ENCODE measurements at regions of chr1 and their contacts with region 1.

Region 1: GRCh38 chr1:9942939-9943788 is at the starts of genes LZIC and NMNAT1:
- DNase-seq: peak in 1 of 2 donors; percentile 91
- H3K4me3 ChIP-seq: peak within 1 kb of the TSS; percentile 65 to 73
- H3K27ac ChIP-seq: peak within 1 kb of the TSS; percentile 85
- H3K4me1 ChIP-seq: peaks cover 27% of the 10 kb centered on the region
- H3K27me3 ChIP-seq: no peaks in the 10 kb centered on the region
- CTCF ChIP-seq: peak in 1 of 3 experiments; percentile 40
- POLR2A ChIP-seq: peak in 1 of 2 donors; percentile 50
- total RNA-seq, gene LZIC: 16.5 TPM
- total RNA-seq, gene NMNAT1: 7.6 TPM

Region 2: DNA sequence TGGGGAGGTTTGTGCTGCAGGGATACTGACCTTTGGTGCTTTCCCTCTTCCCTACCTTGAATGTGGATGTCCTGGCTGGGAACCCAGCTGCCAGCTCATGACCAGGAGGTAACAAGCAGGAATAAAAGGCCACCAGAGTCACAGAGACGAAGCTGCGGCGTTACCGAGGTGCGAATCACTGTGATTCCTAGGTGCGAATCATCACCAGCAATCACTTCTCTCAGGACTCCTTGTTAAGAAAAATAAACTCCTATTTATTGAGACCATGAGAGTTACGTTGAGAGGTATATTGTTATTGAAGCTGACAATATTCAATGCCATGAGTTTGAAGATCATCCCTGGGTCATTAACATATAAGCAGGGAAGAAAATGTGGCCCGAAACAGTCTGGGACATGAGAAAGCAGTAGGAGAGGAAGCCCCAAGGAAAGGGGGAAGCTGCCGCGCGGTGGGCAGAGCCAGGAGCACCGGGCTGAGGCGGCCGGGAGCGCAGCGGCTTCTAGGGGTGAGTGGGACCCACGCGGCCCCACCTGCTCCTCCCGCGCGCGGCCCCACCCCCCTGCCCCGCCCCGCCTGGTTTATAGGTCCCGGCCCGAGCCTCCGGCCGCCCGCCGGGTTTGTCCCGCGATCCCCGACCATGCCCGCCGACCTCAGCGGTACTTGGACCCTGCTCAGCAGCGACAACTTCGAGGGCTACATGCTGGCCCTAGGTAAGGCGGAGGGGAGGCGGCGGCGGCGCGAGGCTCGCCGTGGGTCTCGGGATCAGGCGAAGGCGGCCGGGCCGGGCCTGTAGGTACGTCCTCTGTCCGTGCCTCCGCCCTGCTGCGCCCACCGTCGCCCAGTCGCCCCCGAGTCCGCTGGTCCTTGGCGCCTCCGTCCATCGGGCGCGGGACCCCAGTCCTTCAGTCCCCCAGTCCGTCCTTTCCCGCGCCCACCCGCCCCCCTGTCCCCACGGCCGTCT is 53.7 kb after region 1 on chr1 and contains the start of gene RBP7:
- intact Hi-C with region 1: loop called (anchors 10 kb)
- DNase-seq: no peak
- H3K4me3 ChIP-seq: peak within 1 kb of the TSS; percentile 47 to 64
- H3K27ac ChIP-seq: peak within 1 kb of the TSS; percentile 50
- H3K4me1 ChIP-seq: peaks cover 13% of the 10 kb centered on the region
- H3K27me3 ChIP-seq: no peaks in the 10 kb centered on the region
- CTCF ChIP-seq: no peak
- POLR2A ChIP-seq: no peak
- total RNA-seq, gene RBP7: 36.3 TPM

Region 3: GRCh38 chr1:10032590-10033358 is 89.6 kb after region 1 on chr1 and contains the start of gene UBE4B:
- intact Hi-C with region 1: loop called (anchors 5 kb)
- DNase-seq: peak; percentile 97 to 98
- H3K4me3 ChIP-seq: peak within 1 kb of the TSS; percentile 81 to 93
- H3K27ac ChIP-seq: peak within 1 kb of the TSS; percentile 93
- H3K4me1 ChIP-seq: peaks cover 24% of the 10 kb centered on the region
- H3K27me3 ChIP-seq: no peaks in the 10 kb centered on the region
- CTCF ChIP-seq: peak; percentile 54 to 79 (median 54)
- POLR2A ChIP-seq: peak in 1 of 2 donors; percentile 19
- total RNA-seq, gene UBE4B: 51.1 TPM

Region 4: GRCh38 chr1:10324627-10325026 is 381.5 kb after region 1 on chr1:
- intact Hi-C with region 1: no loop called
- DNase-seq: no peak
- H3K4me3 ChIP-seq: no peak overlapping the region
- H3K27ac ChIP-seq: no peak overlapping the region
- H3K4me1 ChIP-seq: no peaks in the 10 kb centered on the region
- H3K27me3 ChIP-seq: no peaks in the 10 kb centered on the region
- CTCF ChIP-seq: no peak
- POLR2A ChIP-seq: no peak

Measured in vagina (tissue), 2 donors.